Activated CD8-positive, alpha-beta T cell treated with anti-CD3 and anti-CD28 coated beads for 36 hours (primary cell): ENCODE measurements at regions of chr1 and their contacts with region 1.

Region 1: GRCh38 chr1:179867807-179868330 is 9.7 kb downstream of the TOR1AIP2 start:
- DNase-seq: peak; percentile 72
- ATAC-seq: peak; percentile 77
- H3K4me3 Mint-ChIP-seq: no peak overlapping the region
- H3K27ac Mint-ChIP-seq: no peak overlapping the region
- H3K4me1 Mint-ChIP-seq: peaks cover 14% of the 10 kb centered on the region
- H3K27me3 Mint-ChIP-seq: no peaks in the 10 kb centered on the region
- CTCF ChIP-seq: peak; percentile 75

Region 2: DNA sequence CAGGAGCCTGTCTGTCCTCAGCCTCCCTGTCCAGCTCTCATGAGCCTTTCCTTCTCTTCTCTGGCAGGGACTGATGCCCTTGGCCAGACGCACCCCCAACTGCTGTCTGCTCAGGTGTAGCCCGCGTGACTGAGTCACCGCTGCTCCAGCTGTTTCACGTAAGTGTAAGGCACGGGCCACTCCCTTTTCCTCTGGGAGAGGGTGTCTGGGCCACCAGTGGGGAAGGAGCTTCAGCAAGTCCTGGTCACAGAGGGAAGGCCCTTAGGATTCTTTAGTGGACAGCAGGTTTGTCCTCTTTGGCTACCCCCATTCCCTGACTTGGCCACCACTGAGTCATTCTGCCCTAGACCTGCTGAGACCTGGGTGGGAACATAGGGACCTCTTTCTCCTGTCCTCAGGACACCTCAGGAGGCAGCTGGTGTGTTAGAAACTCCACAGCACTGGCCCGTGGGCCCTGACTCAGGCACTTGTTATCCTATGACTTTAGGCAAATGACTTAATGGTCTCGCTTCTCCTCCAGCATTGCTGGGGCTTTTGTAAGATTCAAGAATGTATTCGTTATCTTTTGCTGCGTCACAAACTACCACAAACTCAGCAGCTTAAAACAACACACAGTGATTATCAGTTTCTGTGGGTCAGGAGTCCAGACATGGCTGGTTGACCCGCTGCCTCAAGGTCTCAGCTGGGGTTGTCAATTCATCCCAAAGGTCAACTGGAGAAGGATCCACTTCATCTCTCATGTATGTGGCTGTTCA is 60.0 kb before region 1 on chr1:
- CTCF ChIA-PET with region 1: no interaction called
- POLR2A ChIA-PET with region 1: no interaction called
- intact Hi-C with region 1: no loop called
- DNase-seq: no peak
- ATAC-seq: no peak
- H3K4me3 Mint-ChIP-seq: no peak overlapping the region
- H3K27ac Mint-ChIP-seq: no peak overlapping the region
- H3K4me1 Mint-ChIP-seq: peaks cover 4% of the 10 kb centered on the region
- H3K27me3 Mint-ChIP-seq: peaks cover 2% of the 10 kb centered on the region
- CTCF ChIP-seq: no peak

Region 3: GRCh38 chr1:179853102-179853501 is 14.8 kb before region 1 on chr1:
- CTCF ChIA-PET with region 1: interaction called, 12 read pairs
- POLR2A ChIA-PET with region 1: no interaction called
- intact Hi-C with region 1: no loop called
- DNase-seq: no peak
- ATAC-seq: no peak
- H3K4me3 Mint-ChIP-seq: no peak overlapping the region
- H3K27ac Mint-ChIP-seq: no peak overlapping the region
- H3K4me1 Mint-ChIP-seq: peaks cover 2% of the 10 kb centered on the region
- H3K27me3 Mint-ChIP-seq: no peaks in the 10 kb centered on the region
- CTCF ChIP-seq: no peak

Region 4: DNA sequence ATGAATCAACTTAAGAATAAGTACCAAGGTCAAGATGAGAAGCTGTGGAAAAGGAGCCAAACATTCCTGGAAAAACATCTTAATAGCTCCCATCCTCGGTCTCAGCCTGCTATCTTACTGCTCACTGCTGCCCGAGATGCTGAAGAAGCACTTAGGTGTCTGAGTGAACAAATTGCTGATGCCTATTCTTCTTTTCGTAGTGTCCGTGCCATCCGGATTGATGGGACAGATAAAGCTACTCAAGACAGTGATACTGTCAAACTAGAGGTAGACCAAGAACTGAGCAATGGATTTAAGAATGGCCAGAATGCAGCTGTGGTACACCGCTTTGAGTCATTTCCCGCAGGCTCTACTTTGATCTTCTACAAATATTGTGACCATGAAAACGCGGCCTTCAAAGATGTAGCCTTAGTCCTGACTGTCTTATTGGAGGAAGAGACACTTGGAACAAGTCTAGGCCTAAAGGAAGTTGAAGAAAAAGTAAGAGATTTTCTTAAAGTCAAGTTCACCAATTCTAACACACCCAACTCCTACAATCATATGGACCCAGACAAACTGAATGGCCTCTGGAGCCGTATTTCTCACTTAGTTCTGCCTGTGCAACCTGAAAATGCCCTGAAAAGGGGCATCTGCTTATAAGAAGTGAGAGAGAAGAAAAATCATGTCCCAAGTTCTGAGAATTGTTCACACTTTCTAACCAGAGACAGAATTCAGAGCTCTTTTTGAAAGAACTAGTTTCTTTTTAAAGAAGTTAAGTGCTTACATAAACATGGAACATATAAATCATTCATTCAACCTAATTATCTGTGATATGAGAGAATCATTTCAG is 49.9 kb after region 1 on chr1:
- CTCF ChIA-PET with region 1: interaction called, 10 read pairs
- POLR2A ChIA-PET with region 1: no interaction called
- intact Hi-C with region 1: no loop called
- DNase-seq: peak; percentile 11
- ATAC-seq: peak; percentile 42
- H3K4me3 Mint-ChIP-seq: no peak overlapping the region
- H3K27ac Mint-ChIP-seq: peak overlapping the region; percentile 72
- H3K4me1 Mint-ChIP-seq: peaks cover 15% of the 10 kb centered on the region
- H3K27me3 Mint-ChIP-seq: no peaks in the 10 kb centered on the region
- CTCF ChIP-seq: no peak